Activated naive CD4-positive, alpha-beta T cell treated with anti-CD3 and anti-CD28 coated beads for 36 hours (primary cell): ENCODE measurements at regions of chr4 and their contacts with region 1.

Region 1: GRCh38 chr4:6327041-6327917 is 57.6 kb downstream of the WFS1 start:
- DNase-seq: peak; percentile 84
- H3K4me3 Mint-ChIP-seq: no peak overlapping the region
- H3K27ac Mint-ChIP-seq: no peak overlapping the region
- H3K4me1 Mint-ChIP-seq: no peaks in the 10 kb centered on the region
- H3K27me3 Mint-ChIP-seq: peaks cover 31% of the 10 kb centered on the region

Region 2: DNA sequence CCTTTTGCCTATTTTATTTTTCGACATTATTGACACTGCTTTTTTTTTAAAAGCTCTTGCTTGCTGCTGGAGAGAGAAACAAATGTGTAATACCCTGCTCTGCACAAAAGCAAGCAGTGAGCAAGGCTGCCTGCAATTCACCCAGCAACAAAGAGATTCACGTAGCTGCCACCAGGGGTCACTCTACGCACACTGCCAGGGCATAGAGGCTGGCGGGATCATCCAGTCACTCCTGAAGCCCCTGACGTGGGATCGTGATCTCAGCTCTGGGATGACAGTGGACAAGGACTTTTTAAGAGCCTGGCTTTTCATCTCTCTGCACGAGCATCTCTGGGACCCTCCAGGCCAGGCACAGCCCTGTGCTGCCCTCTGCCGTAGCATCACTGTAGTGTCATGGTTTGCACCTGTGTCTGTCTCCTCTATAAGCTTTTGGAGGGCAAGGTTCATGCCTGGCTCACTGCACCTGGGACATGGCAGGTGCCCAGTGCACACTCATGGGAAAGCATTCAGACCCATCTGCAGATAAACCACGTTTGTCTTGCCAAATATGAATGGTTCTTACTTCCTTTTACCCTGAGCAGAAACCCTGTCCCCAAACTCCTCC is 328.8 kb before region 1 on chr4:
- CTCF ChIA-PET with region 1: interaction called, 9 read pairs
- intact Hi-C with region 1: loop called (anchors 1 kb)
- DNase-seq: peak; percentile 55
- H3K4me3 Mint-ChIP-seq: no peak overlapping the region
- H3K27ac Mint-ChIP-seq: no peak overlapping the region
- H3K4me1 Mint-ChIP-seq: no peaks in the 10 kb centered on the region
- H3K27me3 Mint-ChIP-seq: peaks cover 7% of the 10 kb centered on the region

Region 3: GRCh38 chr4:6264225-6264540 is 63.1 kb before region 1 on chr4:
- CTCF ChIA-PET with region 1: interaction called, 11 read pairs
- intact Hi-C with region 1: loop called (anchors 1 kb)
- DNase-seq: peak; percentile 60
- H3K4me3 Mint-ChIP-seq: no peak overlapping the region
- H3K27ac Mint-ChIP-seq: no peak overlapping the region
- H3K4me1 Mint-ChIP-seq: peaks cover 9% of the 10 kb centered on the region
- H3K27me3 Mint-ChIP-seq: peaks cover 5% of the 10 kb centered on the region

Region 4: DNA sequence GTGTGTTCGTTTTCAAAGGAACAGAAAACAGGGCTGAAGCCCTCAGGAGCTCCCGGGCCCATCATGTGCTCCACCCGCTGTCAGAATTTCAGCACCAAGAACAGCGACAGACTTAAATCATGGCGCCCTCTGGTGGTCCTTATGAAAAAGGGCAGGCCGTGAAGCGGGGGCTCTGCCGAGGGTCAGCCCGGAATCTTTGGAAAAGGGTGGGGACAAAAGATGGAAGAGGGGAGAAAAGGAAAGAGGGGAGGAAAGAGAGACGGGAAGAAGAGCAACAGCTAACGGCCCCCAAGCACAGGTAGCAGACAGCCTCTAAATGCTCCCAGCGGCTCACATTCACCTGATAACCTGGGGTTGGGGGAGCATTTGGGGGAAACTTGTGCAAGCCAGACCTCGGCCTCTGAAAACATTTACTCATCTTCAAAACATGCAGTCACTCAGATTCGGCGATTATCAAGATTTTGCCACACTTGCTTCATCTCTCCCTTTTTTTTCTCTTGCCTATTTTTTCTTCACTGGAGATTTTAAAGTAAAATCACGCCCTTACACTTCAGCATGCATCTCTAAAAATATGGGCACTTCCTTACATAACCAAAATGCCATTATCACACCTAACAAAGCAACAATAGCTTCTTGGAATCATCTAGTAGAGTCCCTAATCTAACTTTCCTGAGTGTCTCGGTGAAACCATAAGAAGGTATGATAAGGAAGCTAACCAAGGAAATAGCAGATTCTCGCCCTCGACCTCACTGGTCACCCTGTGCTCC is 219.6 kb after region 1 on chr4:
- CTCF ChIA-PET with region 1: interaction called, 5 read pairs
- intact Hi-C with region 1: loop called (anchors 2 kb)
- DNase-seq: peak; percentile 61
- H3K4me3 Mint-ChIP-seq: no peak overlapping the region
- H3K27ac Mint-ChIP-seq: no peak overlapping the region
- H3K4me1 Mint-ChIP-seq: no peaks in the 10 kb centered on the region
- H3K27me3 Mint-ChIP-seq: peaks cover 28% of the 10 kb centered on the region